ENCODE measurements at regions of chr17 and their contacts with region 1.

Region 1: DNA sequence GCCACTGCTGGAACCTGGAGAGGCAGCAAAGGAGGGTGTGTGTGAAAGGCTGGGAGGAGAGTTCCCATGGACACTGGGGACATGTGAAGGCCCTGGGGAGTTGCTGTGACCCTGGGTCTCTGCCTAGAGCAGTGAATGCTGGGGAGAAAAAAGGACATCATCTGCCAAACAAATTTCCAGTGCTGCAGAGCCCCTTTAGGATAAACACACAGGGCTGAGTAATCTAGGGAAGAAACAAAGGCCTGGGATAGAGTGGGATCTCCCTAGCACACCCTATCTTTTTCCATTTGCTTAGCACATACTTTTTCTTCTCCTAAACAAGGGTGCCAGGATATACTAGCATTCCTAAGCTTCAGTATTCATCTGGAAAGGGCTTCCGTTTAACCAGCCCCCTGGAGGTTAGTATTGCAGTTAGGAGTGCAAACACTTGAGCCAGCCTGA is 3.3 kb upstream of the HIGD1B start:
- DNase-seq: no peak
- CTCF ChIP-seq: no peak

Region 2: DNA sequence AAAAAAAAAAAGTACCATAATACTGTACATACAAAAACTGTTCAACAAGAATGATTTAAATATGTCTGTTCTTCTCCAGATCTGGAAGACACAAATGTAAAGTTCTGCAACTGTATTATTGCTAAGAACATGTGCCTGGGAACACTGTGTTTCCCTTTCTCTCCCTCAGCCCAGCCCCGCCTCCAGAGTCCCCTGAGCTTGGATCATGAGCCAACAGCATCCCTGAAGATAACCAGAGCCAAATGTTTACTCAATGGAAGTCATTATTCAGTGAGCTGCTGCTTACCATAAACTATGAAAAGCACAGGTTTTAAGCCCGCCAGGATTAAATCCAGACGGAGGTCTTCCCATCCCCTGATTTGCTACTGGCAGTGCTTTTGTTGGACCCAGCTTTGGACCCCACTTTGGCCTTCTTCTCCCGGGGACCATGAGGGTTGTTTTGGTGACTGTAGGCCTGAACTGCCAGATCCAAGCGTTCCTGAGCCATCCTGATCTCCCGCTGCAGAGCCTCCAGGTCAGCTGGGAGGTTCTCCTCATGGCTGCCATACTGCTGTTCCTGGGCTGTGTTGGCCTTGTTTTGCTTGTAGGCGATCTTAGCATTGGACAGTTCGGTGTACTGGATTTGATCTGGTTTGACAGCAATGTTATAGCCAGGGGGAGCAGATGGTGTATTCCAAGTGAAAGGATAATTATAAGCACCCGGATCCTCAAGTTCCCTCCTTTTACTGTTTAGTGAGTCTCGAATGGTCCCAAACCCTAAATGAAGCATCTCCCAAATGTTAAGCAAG is 39.9 kb before region 1 on chr17:
- CTCF ChIA-PET with region 1: interaction called, 3 read pairs
- POLR2A ChIA-PET with region 1: interaction called, 10 read pairs
- DNase-seq: no peak
- CTCF ChIP-seq: no peak